ENCODE measurements at regions of chr16 and their contacts with region 1.

Region 1: DNA sequence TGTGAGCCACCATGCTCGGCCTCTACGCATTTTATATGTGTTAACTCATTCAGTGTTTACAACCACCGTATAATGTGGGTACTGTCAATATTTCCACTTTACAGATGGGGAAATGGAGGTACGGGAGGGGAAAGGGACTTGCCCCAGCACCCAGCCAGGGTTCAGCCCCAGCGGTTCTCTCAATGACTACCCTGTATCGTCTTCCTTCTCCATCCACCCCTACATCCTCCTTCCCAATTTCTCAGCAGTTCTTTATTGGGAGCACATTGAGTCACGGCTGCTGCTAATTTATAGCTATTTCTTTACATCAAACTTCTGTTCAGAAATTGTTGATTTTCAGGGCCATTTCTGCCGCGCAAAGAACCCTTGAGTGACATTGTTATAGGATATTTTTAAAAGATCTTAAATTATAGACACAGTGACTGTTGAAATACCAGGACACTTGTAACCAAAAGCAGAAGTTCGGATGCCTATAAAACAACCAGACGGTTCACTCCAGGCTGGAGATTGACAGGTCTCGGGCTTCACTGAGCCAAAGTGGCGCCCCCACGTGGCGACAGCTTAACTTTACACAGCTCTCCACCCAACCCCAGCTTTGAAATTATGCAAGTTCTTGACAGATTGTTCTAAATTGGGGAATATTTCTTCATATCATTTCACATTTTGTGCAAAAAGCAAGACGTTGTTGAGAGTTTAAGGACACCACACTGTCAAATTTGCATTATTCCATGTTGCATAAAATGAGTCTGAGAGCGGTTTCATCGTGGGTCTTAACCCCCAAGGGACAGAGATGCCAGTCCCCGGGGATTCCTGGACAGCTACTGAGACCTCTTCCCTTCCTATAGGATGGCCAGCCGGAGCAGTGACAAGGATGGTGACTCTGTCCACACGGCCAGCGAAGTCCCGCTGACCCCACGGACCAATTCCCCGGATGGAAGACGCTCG is 11.8 kb downstream of the SYT17 start:
- DNase-seq: no peak
- H3K4me3 ChIP-seq: no peak overlapping the region
- H3K27ac ChIP-seq: no peak overlapping the region
- H3K4me1 ChIP-seq: peaks cover 0 to 10% (median 4%) of the 10 kb centered on the region in 3 donors
- H3K27me3 ChIP-seq: no peaks in the 10 kb centered on the region
- CTCF ChIP-seq: peak; percentile 43 to 73 (median 56)
- POLR2A ChIP-seq: no peak

Region 2: DNA sequence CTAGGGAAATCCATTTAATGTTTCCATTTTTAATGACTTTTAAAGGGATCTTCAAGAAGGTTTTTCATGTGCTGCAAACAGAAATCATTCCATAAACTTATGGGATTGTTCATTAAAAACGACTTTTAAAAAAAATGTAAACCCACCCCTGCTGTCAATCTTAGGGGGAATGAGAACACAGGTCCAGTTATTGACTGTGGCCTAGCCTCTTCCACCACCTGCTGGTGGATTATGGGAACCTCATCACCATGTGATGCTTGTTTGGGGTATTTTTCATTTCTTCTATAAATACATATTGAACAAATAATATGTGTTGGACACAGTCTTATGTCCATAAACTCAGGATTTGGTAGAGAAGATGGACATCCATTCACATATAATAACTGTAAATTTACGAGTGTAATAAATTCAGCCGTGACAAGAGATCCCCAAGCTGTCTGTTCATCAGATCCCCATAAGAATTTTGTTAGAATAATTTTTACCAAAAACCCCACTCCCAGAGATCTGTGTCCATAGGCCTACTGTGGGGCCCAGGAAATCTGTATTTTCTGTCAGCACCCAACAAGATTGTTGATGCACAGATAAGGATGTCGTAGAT is 195.8 kb after region 1 on chr16:
- intact Hi-C with region 1: loop called (anchors 5 kb)
- DNase-seq: no peak
- H3K4me3 ChIP-seq: no peak overlapping the region
- H3K27ac ChIP-seq: no peak overlapping the region
- H3K4me1 ChIP-seq: peaks cover 0 to 7% (median 0%) of the 10 kb centered on the region in 3 donors
- H3K27me3 ChIP-seq: no peaks in the 10 kb centered on the region
- CTCF ChIP-seq: peak; percentile 80 to 93 (median 88)
- POLR2A ChIP-seq: no peak

Region 3: DNA sequence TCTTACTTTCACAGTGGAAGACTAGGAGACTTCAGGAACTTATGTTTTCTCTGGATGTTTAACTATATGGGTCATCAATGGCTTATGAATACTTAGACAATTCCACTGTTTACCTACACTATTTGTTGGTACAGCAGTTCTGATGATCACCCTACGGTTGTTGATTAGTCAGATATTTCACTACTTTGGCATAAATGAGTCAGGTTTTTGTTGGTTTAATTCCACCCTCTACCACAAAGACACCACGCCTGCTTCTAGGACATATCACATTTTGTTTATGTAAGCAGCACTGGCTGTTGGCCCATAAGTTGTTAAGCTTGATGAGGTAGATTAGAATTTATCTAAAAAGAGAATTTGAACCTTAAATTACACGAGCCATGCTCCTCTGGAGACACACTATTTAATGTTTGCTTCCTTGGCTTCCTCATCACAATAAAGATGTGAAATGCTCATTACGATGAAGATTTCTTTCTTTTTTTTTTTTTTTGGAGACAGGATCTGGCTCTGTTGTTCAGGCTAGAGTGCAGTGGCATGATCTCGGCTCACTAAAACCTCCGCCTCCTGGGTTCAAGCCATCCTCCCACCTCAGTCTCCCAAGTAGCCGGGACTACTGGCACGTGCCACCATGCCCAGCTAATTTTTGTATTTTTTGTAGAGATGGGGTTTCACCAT is 337.7 kb after region 1 on chr16:
- intact Hi-C with region 1: loop called (anchors 10 kb)
- DNase-seq: no peak
- H3K4me3 ChIP-seq: no peak overlapping the region
- H3K27ac ChIP-seq: peak overlapping the region in 1 of 4 donors; percentile 2
- H3K4me1 ChIP-seq: peaks cover 11 to 64% (median 14%) of the 10 kb centered on the region in 3 donors
- H3K27me3 ChIP-seq: no peaks in the 10 kb centered on the region
- CTCF ChIP-seq: no peak
- POLR2A ChIP-seq: no peak

Measured in esophagus squamous epithelium (tissue), 5 donors.